Left ventricle myocardium inferior (tissue), 1 donor: ENCODE measurements at regions of chr15 and their contacts with region 1.

Region 1: GRCh38 chr15:33438396-33438795 is 127.6 kb downstream of the RYR3 start:
- DNase-seq: no peak
- H3K4me3 ChIP-seq: no peak overlapping the region
- H3K27ac ChIP-seq: no peak overlapping the region
- H3K4me1 ChIP-seq: no peaks in the 10 kb centered on the region
- H3K27me3 ChIP-seq: peaks cover 23% of the 10 kb centered on the region
- CTCF ChIP-seq: no peak

Region 2: GRCh38 chr15:33489335-33489734 is 50.9 kb after region 1 on chr15:
- intact Hi-C with region 1: loop called (anchors 5 kb)
- DNase-seq: no peak
- H3K4me3 ChIP-seq: no peak overlapping the region
- H3K27ac ChIP-seq: no peak overlapping the region
- H3K4me1 ChIP-seq: no peaks in the 10 kb centered on the region
- H3K27me3 ChIP-seq: no peaks in the 10 kb centered on the region
- CTCF ChIP-seq: no peak